ENCODE measurements at regions of chr6 and their contacts with region 1.

Region 1: GRCh38 chr6:37566111-37566949 is 66.6 kb upstream of the CCDC167 start:
- DNase-seq: peak; percentile 54
- H3K4me3 ChIP-seq: peak overlapping the region in 2 of 4 donors; percentile 13 to 40
- H3K27ac ChIP-seq: no peak overlapping the region
- H3K4me1 ChIP-seq: peaks cover 0 to 7% (median 3%) of the 10 kb centered on the region in 4 donors
- H3K27me3 ChIP-seq: peaks cover 59% of the 10 kb centered on the region
- CTCF ChIP-seq: peak; percentile 77 to 85 (median 79)
- EP300 ChIP-seq: no peak
- POLR2A ChIP-seq: no peak

Region 2: GRCh38 chr6:36000451-36000850 is 1565.9 kb before region 1 on chr6:
- in situ Hi-C with region 1: no loop called
- intact Hi-C with region 1: no loop called
- DNase-seq: no peak
- H3K4me3 ChIP-seq: no peak overlapping the region
- H3K27ac ChIP-seq: no peak overlapping the region
- H3K4me1 ChIP-seq: no peaks in the 10 kb centered on the region
- H3K27me3 ChIP-seq: no peaks in the 10 kb centered on the region
- CTCF ChIP-seq: no peak
- EP300 ChIP-seq: no peak
- POLR2A ChIP-seq: no peak

Region 3: GRCh38 chr6:37324131-37325033 is 241.9 kb before region 1 on chr6:
- in situ Hi-C with region 1: no loop called
- intact Hi-C with region 1: loop called (anchors 10 kb)
- DNase-seq: no peak
- H3K4me3 ChIP-seq: no peak overlapping the region
- H3K27ac ChIP-seq: peak overlapping the region in 2 of 4 donors; percentile 4 to 5
- H3K4me1 ChIP-seq: peaks cover 7 to 21% (median 8%) of the 10 kb centered on the region in 4 donors
- H3K27me3 ChIP-seq: no peaks in the 10 kb centered on the region
- CTCF ChIP-seq: no peak
- EP300 ChIP-seq: no peak
- POLR2A ChIP-seq: no peak

Region 4: DNA sequence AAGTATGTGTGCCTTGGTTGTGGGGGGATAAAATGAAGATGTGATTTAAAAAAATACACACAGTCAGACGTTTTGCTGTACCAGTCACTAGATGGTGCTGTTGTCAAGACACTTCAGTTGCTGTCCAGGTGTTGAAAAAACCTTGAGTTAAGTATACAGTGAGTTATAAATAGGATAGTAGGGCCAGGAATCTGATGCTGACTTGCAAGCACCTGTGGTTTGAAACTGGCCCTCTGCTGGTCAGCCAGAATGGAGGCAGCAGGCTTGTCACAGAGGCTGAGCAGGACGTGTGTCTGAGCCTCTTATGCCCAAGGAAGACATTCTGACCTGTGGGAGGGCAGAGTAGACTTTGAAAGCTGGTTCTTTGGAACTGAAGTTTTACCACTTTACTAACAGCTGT is 184.8 kb before region 1 on chr6:
- in situ Hi-C with region 1: no loop called
- intact Hi-C with region 1: loop called (anchors 5 kb)
- DNase-seq: peak; percentile 16
- H3K4me3 ChIP-seq: no peak overlapping the region
- H3K27ac ChIP-seq: no peak overlapping the region
- H3K4me1 ChIP-seq: no peaks in the 10 kb centered on the region
- H3K27me3 ChIP-seq: no peaks in the 10 kb centered on the region
- CTCF ChIP-seq: peak; percentile 54 to 66 (median 55)
- EP300 ChIP-seq: no peak
- POLR2A ChIP-seq: no peak

Region 5: GRCh38 chr6:37483917-37484785 is 82.2 kb before region 1 on chr6:
- in situ Hi-C with region 1: no loop called
- intact Hi-C with region 1: loop called (anchors 10 kb)
- DNase-seq: peak; percentile 55
- H3K4me3 ChIP-seq: no peak overlapping the region
- H3K27ac ChIP-seq: no peak overlapping the region
- H3K4me1 ChIP-seq: no peaks in the 10 kb centered on the region
- H3K27me3 ChIP-seq: no peaks in the 10 kb centered on the region
- CTCF ChIP-seq: peak; percentile 56 to 79 (median 66)
- EP300 ChIP-seq: no peak
- POLR2A ChIP-seq: no peak